CD4-positive, alpha-beta T cell (primary cell): ENCODE measurements at regions of chr7 and their contacts with region 1.

Region 1: GRCh38 chr7:140696680-140697446 is at the start of gene NDUFB2:
- DNase-seq: peak; percentile 43 to 86 (median 58)
- ATAC-seq: peak; percentile 75
- H3K4me3 ChIP-seq: peak within 1 kb of the TSS; percentile 97
- H3K4me3 Mint-ChIP-seq: peak within 1 kb of the TSS; percentile 100
- H3K27ac ChIP-seq: peak within 1 kb of the TSS; percentile 91 to 96
- H3K27ac Mint-ChIP-seq: peak within 1 kb of the TSS; percentile 100
- H3K4me1 ChIP-seq: peaks cover 33% of the 10 kb centered on the region
- H3K4me1 Mint-ChIP-seq: peaks cover 38% of the 10 kb centered on the region
- H3K27me3 ChIP-seq: no peaks in the 10 kb centered on the region
- H3K27me3 Mint-ChIP-seq: no peaks in the 10 kb centered on the region
- CTCF ChIP-seq: no peak
- total RNA-seq, gene NDUFB2: 73.7 to 84.4 TPM

Region 2: DNA sequence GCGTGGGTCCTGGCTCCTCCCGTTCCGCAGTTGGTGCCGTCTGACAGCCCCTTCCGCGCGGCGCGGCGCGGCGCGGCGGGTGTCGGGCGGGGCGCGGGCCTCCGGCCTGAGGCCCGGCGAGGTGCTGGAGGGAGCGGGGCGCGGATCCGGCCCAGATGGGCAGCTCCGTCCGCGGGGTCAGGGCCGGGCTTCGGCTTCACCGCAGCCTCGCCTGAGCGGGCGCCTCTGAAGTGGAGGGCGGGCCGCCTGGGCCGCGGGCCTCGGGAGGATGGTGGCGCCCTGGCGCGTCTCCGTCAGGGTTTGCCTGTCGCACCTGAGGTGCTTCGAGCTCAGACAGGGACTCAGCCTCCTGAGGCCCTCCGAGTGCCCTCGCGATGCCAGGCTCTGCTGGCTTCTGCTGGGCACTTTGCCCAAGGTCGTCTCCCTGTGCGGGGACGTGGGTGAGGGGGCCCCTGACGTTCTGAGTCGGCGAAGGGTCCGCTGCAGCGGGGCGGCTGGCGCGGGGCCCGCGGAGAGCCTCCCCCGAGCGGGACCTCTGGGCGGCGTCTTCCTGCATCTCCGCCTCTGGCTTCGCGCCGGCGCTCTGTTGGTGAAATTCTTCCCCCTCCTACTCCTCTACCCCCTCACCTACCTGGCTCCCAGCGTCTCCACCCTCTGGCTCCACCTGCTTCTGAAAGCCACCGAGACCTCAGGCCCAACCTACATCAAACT is 23.6 kb before region 1 on chr7:
- CTCF ChIA-PET with region 1: no interaction called
- POLR2A ChIA-PET with region 1: interaction called, 13 read pairs
- intact Hi-C with region 1: loop called (anchors 1 kb)
- DNase-seq: peak; percentile 39 to 82 (median 59)
- ATAC-seq: peak; percentile 74
- H3K4me3 ChIP-seq: peak overlapping the region; percentile 63
- H3K4me3 Mint-ChIP-seq: peak overlapping the region; percentile 88
- H3K27ac ChIP-seq: peak overlapping the region; percentile 71 to 79
- H3K27ac Mint-ChIP-seq: peak overlapping the region; percentile 90
- H3K4me1 ChIP-seq: peaks cover 29% of the 10 kb centered on the region
- H3K4me1 Mint-ChIP-seq: peaks cover 32% of the 10 kb centered on the region
- H3K27me3 ChIP-seq: no peaks in the 10 kb centered on the region
- H3K27me3 Mint-ChIP-seq: no peaks in the 10 kb centered on the region
- CTCF ChIP-seq: no peak

Region 3: DNA sequence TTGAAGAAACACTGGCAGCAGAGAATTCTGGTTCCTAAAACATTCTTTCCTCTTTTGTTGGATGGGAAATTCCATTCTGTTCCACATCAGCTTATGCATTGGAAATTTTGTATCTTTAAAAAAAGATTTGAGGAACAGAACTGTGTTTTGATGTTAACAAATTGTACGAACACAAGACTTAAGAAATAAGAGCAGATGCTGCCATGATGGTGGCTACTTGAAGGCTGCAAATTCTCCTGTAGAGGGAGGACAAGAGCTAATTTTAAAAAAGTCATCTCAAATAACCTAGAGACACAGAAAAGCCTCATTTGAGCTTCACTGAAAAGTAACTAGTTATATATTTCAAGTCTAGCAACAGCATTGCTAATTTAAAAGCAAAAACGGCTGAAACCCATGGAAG is 29.4 kb after region 1 on chr7:
- CTCF ChIA-PET with region 1: no interaction called
- POLR2A ChIA-PET with region 1: interaction called, 10 read pairs
- intact Hi-C with region 1: no loop called
- DNase-seq: peak in 3 of 14 experiments; percentile 16 to 20 (median 16)
- ATAC-seq: no peak
- H3K4me3 ChIP-seq: no peak overlapping the region
- H3K4me3 Mint-ChIP-seq: no peak overlapping the region
- H3K27ac ChIP-seq: no peak overlapping the region
- H3K27ac Mint-ChIP-seq: peak overlapping the region; percentile 48
- H3K4me1 ChIP-seq: peaks cover 3% of the 10 kb centered on the region
- H3K4me1 Mint-ChIP-seq: peaks cover 19% of the 10 kb centered on the region
- H3K27me3 ChIP-seq: no peaks in the 10 kb centered on the region
- H3K27me3 Mint-ChIP-seq: no peaks in the 10 kb centered on the region
- CTCF ChIP-seq: no peak

Region 4: GRCh38 chr7:141737834-141738591 is 1041.2 kb after region 1 on chr7 and contains the start of gene SSBP1:
- CTCF ChIA-PET with region 1: no interaction called
- POLR2A ChIA-PET with region 1: no interaction called
- intact Hi-C with region 1: loop called in 1 of 2 experiments (anchors 10 kb)
- DNase-seq: peak; percentile 83 to 97 (median 88)
- ATAC-seq: peak; percentile 82
- H3K4me3 ChIP-seq: peak within 1 kb of the TSS; percentile 76
- H3K4me3 Mint-ChIP-seq: peak within 1 kb of the TSS; percentile 97
- H3K27ac ChIP-seq: peak within 1 kb of the TSS; percentile 86 to 89
- H3K27ac Mint-ChIP-seq: peak within 1 kb of the TSS; percentile 93
- H3K4me1 ChIP-seq: peaks cover 25% of the 10 kb centered on the region
- H3K4me1 Mint-ChIP-seq: peaks cover 46% of the 10 kb centered on the region
- H3K27me3 ChIP-seq: no peaks in the 10 kb centered on the region
- H3K27me3 Mint-ChIP-seq: no peaks in the 10 kb centered on the region
- CTCF ChIP-seq: peak; percentile 95
- total RNA-seq, gene SSBP1: 108 to 116 TPM